ENCODE measurements at regions of chr11 and their contacts with region 1.

Region 1: GRCh38 chr11:18243783-18244362 is 4.6 kb downstream of the SAA2 start:
- DNase-seq: peak; percentile 81
- H3K4me3 Mint-ChIP-seq: no peak overlapping the region
- H3K27ac Mint-ChIP-seq: no peak overlapping the region
- H3K4me1 Mint-ChIP-seq: peaks cover 6% of the 10 kb centered on the region
- H3K27me3 Mint-ChIP-seq: peaks cover 4% of the 10 kb centered on the region

Region 2: GRCh38 chr11:16958833-16959232 is 1285.0 kb before region 1 on chr11:
- CTCF ChIA-PET with region 1: no interaction called
- intact Hi-C with region 1: no loop called
- DNase-seq: no peak
- H3K4me3 Mint-ChIP-seq: no peak overlapping the region
- H3K27ac Mint-ChIP-seq: no peak overlapping the region
- H3K4me1 Mint-ChIP-seq: no peaks in the 10 kb centered on the region
- H3K27me3 Mint-ChIP-seq: no peaks in the 10 kb centered on the region

Region 3: GRCh38 chr11:18171377-18172000 is 72.4 kb before region 1 on chr11:
- CTCF ChIA-PET with region 1: no interaction called
- intact Hi-C with region 1: loop called (anchors 5 kb)
- DNase-seq: peak; percentile 52
- H3K4me3 Mint-ChIP-seq: no peak overlapping the region
- H3K27ac Mint-ChIP-seq: no peak overlapping the region
- H3K4me1 Mint-ChIP-seq: no peaks in the 10 kb centered on the region
- H3K27me3 Mint-ChIP-seq: peaks cover 11% of the 10 kb centered on the region

Region 4: DNA sequence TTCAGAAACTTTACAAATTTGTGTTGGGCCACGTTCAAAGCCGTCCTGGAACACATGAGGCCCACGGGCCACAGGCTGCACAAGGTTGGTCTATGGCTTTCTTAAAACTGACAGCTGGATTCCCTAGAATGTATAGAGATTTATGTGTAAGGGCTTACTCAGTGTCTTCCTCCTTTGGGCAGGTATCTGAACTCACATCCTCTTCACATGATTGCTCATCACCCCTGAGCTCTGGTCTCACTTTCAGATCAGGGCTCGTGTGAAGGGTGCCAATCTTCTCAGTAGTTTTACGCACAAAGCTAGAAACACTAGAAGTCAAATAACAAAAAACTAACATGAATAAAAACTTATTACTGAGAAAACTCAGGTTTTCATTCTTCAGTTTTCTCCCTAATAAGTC is 51.0 kb after region 1 on chr11:
- CTCF ChIA-PET with region 1: interaction called, 13 read pairs
- intact Hi-C with region 1: no loop called
- DNase-seq: peak; percentile 10
- H3K4me3 Mint-ChIP-seq: no peak overlapping the region
- H3K27ac Mint-ChIP-seq: no peak overlapping the region
- H3K4me1 Mint-ChIP-seq: peaks cover 2% of the 10 kb centered on the region
- H3K27me3 Mint-ChIP-seq: no peaks in the 10 kb centered on the region

Region 5: DNA sequence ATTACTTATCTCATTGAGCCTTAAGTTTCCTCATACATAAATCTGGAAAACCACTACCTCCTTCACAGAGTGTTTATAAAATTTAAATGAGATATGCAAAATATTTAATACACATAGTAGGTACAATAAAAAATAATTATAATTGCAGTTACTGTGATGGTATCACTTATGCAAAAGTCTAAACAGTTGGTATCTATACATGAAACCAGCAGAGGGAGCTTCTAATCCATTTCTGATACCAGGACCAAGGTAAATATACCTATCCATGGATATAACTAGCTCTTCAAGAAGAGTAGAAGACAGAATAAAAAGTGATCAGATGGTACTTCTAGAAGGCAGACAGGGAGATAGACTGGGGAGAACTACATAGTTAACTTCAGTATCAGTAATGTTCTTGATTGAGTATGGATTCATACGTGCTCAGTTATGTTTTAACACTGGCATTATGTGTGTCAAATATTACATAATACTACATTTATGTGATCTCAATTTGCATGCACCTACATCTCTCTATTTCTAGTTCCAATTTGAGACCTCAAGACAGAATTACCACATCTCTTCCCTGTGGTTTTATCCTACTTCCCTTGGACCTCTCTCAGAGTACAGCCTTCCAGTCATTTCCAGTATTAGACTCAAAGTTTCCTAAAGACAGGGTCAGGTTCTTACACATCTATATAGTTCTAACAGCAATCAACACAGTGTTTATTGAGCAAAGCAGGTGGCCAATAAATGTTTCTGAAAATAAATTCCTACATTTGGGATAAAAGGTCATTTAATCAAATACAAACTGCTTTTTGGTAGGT is 296.5 kb after region 1 on chr11:
- CTCF ChIA-PET with region 1: interaction called, 4 read pairs
- intact Hi-C with region 1: loop called (anchors 5 kb)
- DNase-seq: no peak
- H3K4me3 Mint-ChIP-seq: no peak overlapping the region
- H3K27ac Mint-ChIP-seq: no peak overlapping the region
- H3K4me1 Mint-ChIP-seq: peaks cover 6% of the 10 kb centered on the region
- H3K27me3 Mint-ChIP-seq: no peaks in the 10 kb centered on the region

Region 6: GRCh38 chr11:18650859-18651557 is 407.1 kb after region 1 on chr11:
- CTCF ChIA-PET with region 1: interaction called, 8 read pairs
- intact Hi-C with region 1: loop called (anchors 1 kb)
- DNase-seq: peak; percentile 65
- H3K4me3 Mint-ChIP-seq: no peak overlapping the region
- H3K27ac Mint-ChIP-seq: no peak overlapping the region
- H3K4me1 Mint-ChIP-seq: no peaks in the 10 kb centered on the region
- H3K27me3 Mint-ChIP-seq: no peaks in the 10 kb centered on the region

Region 7: GRCh38 chr11:18731949-18732821 is 488.3 kb after region 1 on chr11:
- CTCF ChIA-PET with region 1: interaction called, 7 read pairs
- intact Hi-C with region 1: loop called (anchors 1 kb)
- DNase-seq: peak; percentile 79
- H3K4me3 Mint-ChIP-seq: no peak overlapping the region
- H3K27ac Mint-ChIP-seq: no peak overlapping the region
- H3K4me1 Mint-ChIP-seq: peaks cover 3% of the 10 kb centered on the region
- H3K27me3 Mint-ChIP-seq: no peaks in the 10 kb centered on the region